ENCODE measurements at regions of chr1 and their contacts with region 1.

Region 1: GRCh38 chr1:173050865-173051264 is at the start of gene TNFSF18:
- DNase-seq: peak; percentile 96
- H3K4me3 ChIP-seq: peak within 1 kb of the TSS in 2 of 3 experiments; percentile 1 to 63
- H3K27ac ChIP-seq: peak within 1 kb of the TSS; percentile 54
- H3K4me1 ChIP-seq: peaks cover 52% of the 10 kb centered on the region
- H3K27me3 ChIP-seq: no peaks in the 10 kb centered on the region
- CTCF ChIP-seq: no peak
- POLR2A ChIP-seq: no peak
- total RNA-seq, gene TNFSF18: 39.4 and 39.9 TPM in 2 replicates

Region 2: DNA sequence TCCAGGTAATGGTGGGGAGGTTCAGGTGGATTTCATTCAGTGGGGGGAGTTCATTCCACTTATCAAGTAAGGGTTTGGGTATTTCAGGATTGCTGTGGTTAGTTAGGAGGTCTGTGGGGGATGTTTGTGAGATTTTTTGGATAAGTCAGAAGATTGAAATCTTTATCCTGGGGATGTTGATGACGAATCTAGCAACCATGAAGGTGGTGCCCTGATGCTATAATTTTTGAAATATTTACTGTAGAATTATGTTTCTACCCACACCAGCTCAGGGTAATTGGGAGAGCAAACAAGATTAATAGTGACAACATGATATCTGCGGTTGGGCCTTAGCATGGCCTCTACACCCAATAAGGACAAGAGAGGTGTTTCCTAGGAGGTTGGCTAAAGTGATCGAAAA is 489.6 kb before region 1 on chr1:
- CTCF ChIA-PET with region 1: no interaction called
- POLR2A ChIA-PET with region 1: no interaction called
- dilution Hi-C with region 1: no loop called
- intact Hi-C with region 1: no loop called
- DNase-seq: no peak
- H3K4me3 ChIP-seq: no peak overlapping the region
- H3K27ac ChIP-seq: no peak overlapping the region
- H3K4me1 ChIP-seq: no peaks in the 10 kb centered on the region
- H3K27me3 ChIP-seq: no peaks in the 10 kb centered on the region
- CTCF ChIP-seq: no peak
- POLR2A ChIP-seq: no peak

Region 3: GRCh38 chr1:172976222-172977041 is 74.4 kb before region 1 on chr1:
- CTCF ChIA-PET with region 1: no interaction called
- POLR2A ChIA-PET with region 1: no interaction called
- dilution Hi-C with region 1: no loop called
- intact Hi-C with region 1: loop called (anchors 5 kb)
- DNase-seq: peak; percentile 79
- H3K4me3 ChIP-seq: no peak overlapping the region
- H3K27ac ChIP-seq: peak overlapping the region; percentile 72
- H3K4me1 ChIP-seq: peaks cover 31% of the 10 kb centered on the region
- H3K27me3 ChIP-seq: no peaks in the 10 kb centered on the region
- CTCF ChIP-seq: no peak
- POLR2A ChIP-seq: no peak

Region 4: GRCh38 chr1:173122958-173123852 is 72.3 kb after region 1 on chr1:
- CTCF ChIA-PET with region 1: interaction called, 5 read pairs
- POLR2A ChIA-PET with region 1: no interaction called
- dilution Hi-C with region 1: no loop called
- intact Hi-C with region 1: loop called (anchors 1 kb)
- DNase-seq: peak; percentile 65
- H3K4me3 ChIP-seq: peak overlapping the region in 2 of 3 experiments; percentile 6 to 52
- H3K27ac ChIP-seq: peak overlapping the region; percentile 1
- H3K4me1 ChIP-seq: peaks cover 18% of the 10 kb centered on the region
- H3K27me3 ChIP-seq: no peaks in the 10 kb centered on the region
- CTCF ChIP-seq: no peak
- POLR2A ChIP-seq: no peak

Region 5: GRCh38 chr1:173190101-173190906 is 139.4 kb after region 1 on chr1:
- CTCF ChIA-PET with region 1: interaction called, 4 read pairs
- POLR2A ChIA-PET with region 1: no interaction called
- dilution Hi-C with region 1: no loop called
- intact Hi-C with region 1: loop called (anchors 1 kb)
- DNase-seq: peak; percentile 99
- H3K4me3 ChIP-seq: no peak overlapping the region
- H3K27ac ChIP-seq: peak overlapping the region; percentile 98
- H3K4me1 ChIP-seq: peaks cover 58% of the 10 kb centered on the region
- H3K27me3 ChIP-seq: no peaks in the 10 kb centered on the region
- CTCF ChIP-seq: no peak
- POLR2A ChIP-seq: peak; percentile 35

Measured in endothelial cell of umbilical vein (primary cell).